ENCODE measurements at regions of chr20 and their contacts with region 1.

Region 1: DNA sequence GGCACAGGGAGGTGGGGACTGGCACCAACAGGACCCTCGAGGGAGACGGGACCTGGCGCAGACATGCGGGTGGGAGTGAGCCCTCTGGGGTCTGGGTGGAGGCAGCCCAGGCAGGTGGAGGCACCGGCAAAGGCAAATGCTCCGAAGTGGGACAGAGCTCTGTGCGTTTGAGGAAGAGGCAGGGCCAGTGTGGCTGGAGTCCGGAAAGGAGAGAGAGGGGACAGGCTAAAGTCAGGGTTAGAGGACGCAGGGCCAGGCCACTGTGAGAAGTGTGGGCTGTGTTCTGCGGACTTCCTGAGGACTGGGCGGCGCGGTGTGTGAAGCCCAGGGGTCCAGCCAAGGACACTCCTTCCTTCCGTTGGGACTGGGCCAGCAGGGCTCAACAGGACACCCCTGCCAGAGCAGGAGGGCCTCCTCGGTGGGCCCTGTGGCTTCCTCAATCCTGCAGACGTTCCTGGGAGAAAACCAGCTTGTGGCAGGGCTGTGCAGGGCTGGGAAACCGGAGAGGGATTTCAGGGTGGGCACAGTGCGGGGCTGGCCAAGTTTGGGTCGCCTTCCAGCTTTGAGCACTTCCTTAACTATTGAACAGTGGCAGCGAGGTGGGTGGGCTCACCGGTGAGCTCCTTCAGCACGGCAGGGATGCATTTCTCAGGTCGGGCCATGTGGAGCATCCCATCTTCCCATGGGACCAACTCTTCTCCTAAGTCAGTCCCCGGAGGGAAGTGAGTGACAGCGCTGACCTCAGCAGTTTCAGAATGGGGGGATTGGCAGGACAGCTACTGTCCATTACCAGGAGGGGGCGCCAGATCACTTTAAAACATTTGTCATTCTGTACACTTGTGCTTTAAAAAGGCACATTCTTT is 22.5 kb downstream of the MOCS3 start:
- DNase-seq: peak; percentile 75
- CTCF ChIP-seq: peak; percentile 74

Region 2: DNA sequence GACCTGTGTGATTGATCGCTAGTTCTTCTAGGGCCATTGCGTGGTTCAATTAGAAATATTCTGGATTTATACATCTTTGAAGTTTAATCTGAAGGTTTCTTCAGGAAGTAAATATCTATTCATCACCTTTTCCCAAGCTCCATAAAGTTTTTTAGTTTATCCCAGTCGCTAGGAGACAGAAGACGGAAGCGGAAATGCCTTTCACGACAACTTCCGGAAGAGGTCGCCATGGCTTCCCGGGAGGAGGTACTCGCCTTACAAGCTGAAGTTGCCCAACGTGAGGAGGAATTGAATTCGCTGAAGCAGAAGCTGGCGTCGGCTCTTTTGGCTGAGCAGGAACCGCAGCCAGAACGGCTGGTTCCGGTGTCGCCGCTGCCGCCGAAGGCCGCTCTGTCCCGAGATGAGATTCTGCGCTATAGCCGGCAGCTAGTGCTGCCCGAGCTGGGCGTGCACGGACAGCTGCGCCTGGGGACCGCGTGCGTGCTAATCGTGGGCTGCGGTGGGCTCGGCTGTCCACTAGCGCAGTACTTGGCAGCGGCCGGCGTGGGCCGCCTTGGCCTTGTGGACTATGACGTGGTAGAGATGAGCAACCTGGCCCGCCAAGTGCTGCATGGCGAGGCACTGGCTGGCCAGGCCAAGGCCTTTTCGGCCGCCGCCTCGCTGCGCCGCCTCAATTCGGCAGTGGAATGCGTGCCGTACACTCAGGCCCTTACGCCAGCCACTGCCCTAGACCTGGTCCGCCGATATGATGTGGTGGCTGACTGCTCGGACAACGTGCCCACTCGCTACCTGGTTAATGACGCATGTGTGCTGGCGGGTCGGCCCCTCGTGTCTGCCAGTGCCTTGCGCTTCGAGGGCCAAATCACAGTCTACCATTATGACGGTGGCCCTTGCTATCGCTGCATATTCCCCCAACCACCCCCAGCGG is 22.2 kb before region 1 on chr20 and contains the start of gene MOCS3:
- CTCF ChIA-PET with region 1: interaction called, 10 read pairs
- POLR2A ChIA-PET with region 1: interaction called, 3 read pairs
- DNase-seq: peak; percentile 90
- CTCF ChIP-seq: peak; percentile 9

Region 3: GRCh38 chr20:50967586-50967985 is 13.5 kb before region 1 on chr20:
- CTCF ChIA-PET with region 1: interaction called, 55 read pairs
- POLR2A ChIA-PET with region 1: no interaction called
- DNase-seq: no peak
- CTCF ChIP-seq: no peak

Region 4: DNA sequence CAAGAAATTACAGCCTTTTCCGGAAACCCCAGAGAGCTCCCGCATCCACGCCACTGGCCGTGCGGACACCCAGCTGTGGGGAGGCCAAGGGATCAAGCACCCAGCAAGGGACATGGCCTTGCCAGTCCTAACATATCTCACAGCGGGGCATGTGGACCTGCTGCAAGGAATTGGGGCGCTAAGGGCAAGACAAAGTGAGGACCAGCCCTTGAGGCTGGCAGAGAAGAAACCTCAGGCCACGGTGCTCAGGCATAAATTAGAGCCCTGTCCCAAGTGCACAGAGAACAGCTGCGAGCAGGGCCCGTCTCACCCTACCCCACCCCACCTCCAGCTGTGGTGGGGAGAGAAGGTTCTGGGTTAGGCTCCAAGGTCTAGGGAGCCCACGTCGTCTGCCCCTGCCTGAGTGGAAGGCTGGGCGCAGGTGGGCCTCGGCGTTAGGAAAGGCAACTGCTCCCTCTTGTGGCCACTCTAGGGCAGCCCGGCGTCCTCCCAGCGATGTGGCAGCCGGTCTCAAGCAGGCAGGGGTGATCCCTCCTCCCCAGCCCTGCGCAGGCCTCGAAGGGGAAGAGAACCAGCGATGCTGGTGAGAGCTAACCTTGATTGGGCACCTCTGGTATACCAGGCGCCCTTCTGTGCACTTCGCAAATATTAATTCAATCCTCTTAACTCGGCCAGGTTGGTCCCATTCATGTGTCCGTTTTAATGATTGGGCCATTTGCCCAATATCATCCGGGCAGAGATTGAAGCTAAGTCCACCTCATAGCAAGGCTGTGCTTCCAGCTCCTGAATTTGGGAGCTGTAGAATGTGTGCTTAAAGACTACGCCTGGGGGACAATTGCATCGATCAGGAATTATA is 325.6 kb after region 1 on chr20:
- CTCF ChIA-PET with region 1: interaction called, 194 read pairs
- POLR2A ChIA-PET with region 1: no interaction called
- DNase-seq: peak; percentile 87
- CTCF ChIP-seq: peak; percentile 96

Region 5: DNA sequence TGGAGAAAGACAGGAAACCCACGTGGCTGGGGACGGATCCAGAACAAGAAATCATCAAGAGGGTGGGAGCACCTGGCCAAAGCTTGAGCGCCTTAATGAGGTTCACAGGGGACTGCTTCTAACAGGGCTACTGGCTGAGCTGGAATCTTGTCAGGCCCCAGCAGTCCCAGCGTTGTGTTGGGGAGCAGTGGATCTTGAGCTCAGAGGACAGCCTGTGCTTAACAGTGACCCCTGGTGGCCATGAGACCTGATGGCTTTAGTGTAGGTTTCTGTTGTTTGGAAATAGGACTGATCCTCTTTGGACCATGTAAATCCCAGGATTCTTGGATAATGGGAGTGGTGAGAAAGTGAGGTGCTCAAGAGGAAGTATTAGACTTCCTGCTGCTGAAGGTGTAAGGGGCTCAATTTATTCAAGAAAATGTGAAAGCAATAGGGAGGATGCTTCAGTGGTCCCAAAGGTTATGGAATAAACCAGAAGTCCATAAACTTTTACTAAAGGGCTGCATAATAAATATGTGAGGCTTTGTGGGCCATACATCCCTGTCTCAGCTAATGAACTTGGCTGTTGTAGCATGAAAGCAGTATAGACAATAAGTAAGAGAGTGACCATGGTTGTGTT is 345.2 kb after region 1 on chr20:
- CTCF ChIA-PET with region 1: interaction called, 125 read pairs
- POLR2A ChIA-PET with region 1: no interaction called
- DNase-seq: peak; percentile 40
- CTCF ChIP-seq: peak; percentile 53